ENCODE measurements at regions of chr7 and their contacts with region 1.

Region 1: DNA sequence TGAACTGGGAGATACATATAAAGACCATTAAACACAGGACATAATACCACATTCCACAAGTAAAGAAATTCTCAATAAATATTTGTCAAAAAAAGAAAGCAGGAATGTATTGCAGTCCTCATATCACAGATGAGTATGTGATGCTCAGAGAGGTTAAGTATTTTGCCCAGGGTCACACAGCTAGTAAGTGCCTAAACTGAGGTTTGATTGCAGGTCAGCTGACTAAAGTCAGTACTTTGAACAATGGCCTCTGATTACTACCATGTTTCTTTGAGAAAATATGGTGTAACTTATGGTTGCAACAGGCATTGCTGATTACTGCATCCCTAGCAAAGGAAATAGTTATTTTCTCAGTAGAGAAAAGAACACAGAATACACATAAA is 267.1 kb downstream of the ELMO1 start:
- DNase-seq: no peak
- ATAC-seq: no peak
- H3K4me3 ChIP-seq: no peak overlapping the region
- H3K4me3 Mint-ChIP-seq: no peak overlapping the region
- H3K27ac ChIP-seq: no peak overlapping the region
- H3K27ac Mint-ChIP-seq: no peak overlapping the region
- H3K4me1 ChIP-seq: peaks cover 0 to 9% of the 10 kb centered on the region in 2 donors
- H3K4me1 Mint-ChIP-seq: peaks cover 0 to 17% (median 10%) of the 10 kb centered on the region in 7 donors
- H3K27me3 ChIP-seq: no peaks in the 10 kb centered on the region
- H3K27me3 Mint-ChIP-seq: no peaks in the 10 kb centered on the region

Region 2: GRCh38 chr7:36315309-36316133 is 866.0 kb before region 1 on chr7:
- CTCF ChIA-PET with region 1: interaction called, 4 read pairs
- POLR2A ChIA-PET with region 1: no interaction called
- intact Hi-C with region 1: loop called in 1 of 2 experiments (anchors 5 kb)
- DNase-seq: no peak
- ATAC-seq: no peak
- H3K4me3 ChIP-seq: no peak overlapping the region
- H3K4me3 Mint-ChIP-seq: no peak overlapping the region
- H3K27ac ChIP-seq: no peak overlapping the region
- H3K27ac Mint-ChIP-seq: no peak overlapping the region
- H3K4me1 ChIP-seq: no peaks in the 10 kb centered on the region
- H3K4me1 Mint-ChIP-seq: peaks cover 0 to 5% (median 3%) of the 10 kb centered on the region in 7 donors
- H3K27me3 ChIP-seq: no peaks in the 10 kb centered on the region
- H3K27me3 Mint-ChIP-seq: peaks cover 0 to 2% (median 0%) of the 10 kb centered on the region in 5 donors

Region 3: DNA sequence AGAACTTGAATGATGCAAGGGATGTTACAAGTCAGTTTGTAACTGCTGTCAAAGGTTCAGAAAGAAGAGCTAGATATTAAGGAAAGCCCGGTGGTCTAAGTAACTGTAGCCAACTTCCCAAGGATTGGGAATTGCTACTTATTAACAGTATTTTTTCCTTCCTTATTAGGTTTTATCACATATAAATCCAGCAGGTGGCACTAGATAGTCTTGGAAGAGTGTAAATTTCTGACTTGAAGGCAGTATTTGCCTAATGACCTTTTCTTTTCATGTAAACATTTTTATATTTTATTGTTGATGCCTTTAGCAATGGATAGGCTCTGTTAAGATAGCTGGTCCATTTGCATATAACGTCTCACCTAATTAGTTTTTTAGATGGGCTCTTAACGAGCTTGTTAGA is 740.7 kb before region 1 on chr7:
- CTCF ChIA-PET with region 1: interaction called, 16 read pairs
- POLR2A ChIA-PET with region 1: no interaction called
- intact Hi-C with region 1: loop called in 1 of 2 experiments (anchors 1 kb)
- DNase-seq: peak in 4 of 9 donors; percentile 3 to 19 (median 10)
- ATAC-seq: no peak
- H3K4me3 ChIP-seq: no peak overlapping the region
- H3K4me3 Mint-ChIP-seq: no peak overlapping the region
- H3K27ac ChIP-seq: no peak overlapping the region
- H3K27ac Mint-ChIP-seq: no peak overlapping the region
- H3K4me1 ChIP-seq: no peaks in the 10 kb centered on the region
- H3K4me1 Mint-ChIP-seq: no peaks in the 10 kb centered on the region
- H3K27me3 ChIP-seq: no peaks in the 10 kb centered on the region
- H3K27me3 Mint-ChIP-seq: no peaks in the 10 kb centered on the region

Region 4: DNA sequence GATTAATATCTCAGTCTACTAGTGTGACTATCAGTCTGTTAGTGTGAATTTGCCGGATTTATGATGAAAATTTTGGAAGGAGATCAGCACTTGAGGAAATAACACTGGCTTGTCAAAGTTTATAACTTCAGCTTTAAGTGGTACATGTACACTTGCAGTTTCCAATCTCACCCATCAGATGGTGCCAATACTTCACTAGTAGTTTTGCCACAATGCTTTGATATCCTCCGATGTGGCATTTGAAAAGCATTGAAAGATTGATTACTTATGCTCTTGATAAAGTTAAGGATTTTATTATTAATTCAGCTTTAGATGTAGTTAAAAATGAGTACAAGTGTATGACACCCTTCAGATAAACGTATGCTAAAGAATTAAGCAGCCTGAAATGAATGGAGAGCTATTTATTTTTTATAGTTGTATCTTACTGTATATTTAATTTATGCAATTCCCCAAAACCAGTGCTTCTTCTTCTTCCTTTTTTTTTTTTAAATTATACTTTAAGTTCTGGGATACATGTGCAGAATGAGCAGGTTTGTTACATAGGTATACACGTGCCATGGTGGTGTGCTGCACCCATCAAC is 693.7 kb before region 1 on chr7:
- CTCF ChIA-PET with region 1: interaction called, 30 read pairs
- POLR2A ChIA-PET with region 1: interaction called, 3 read pairs
- intact Hi-C with region 1: loop called (anchors 1 kb)
- DNase-seq: peak in 7 of 9 donors; percentile 47 to 72 (median 61)
- ATAC-seq: peak; percentile 78
- H3K4me3 ChIP-seq: no peak overlapping the region
- H3K4me3 Mint-ChIP-seq: no peak overlapping the region
- H3K27ac ChIP-seq: no peak overlapping the region
- H3K27ac Mint-ChIP-seq: peak overlapping the region in 1 of 9 donors; percentile 81
- H3K4me1 ChIP-seq: no peaks in the 10 kb centered on the region
- H3K4me1 Mint-ChIP-seq: peaks cover 0 to 9% (median 3%) of the 10 kb centered on the region in 7 donors
- H3K27me3 ChIP-seq: no peaks in the 10 kb centered on the region
- H3K27me3 Mint-ChIP-seq: peaks cover 0 to 22% (median 0%) of the 10 kb centered on the region in 5 donors

Region 5: GRCh38 chr7:36677769-36678437 is 503.6 kb before region 1 on chr7:
- CTCF ChIA-PET with region 1: interaction called, 24 read pairs
- POLR2A ChIA-PET with region 1: no interaction called
- intact Hi-C with region 1: loop called (anchors 1 to 5 kb)
- DNase-seq: peak in 5 of 9 donors; percentile 5 to 68 (median 25)
- ATAC-seq: peak; percentile 19
- H3K4me3 ChIP-seq: peak overlapping the region; percentile 5
- H3K4me3 Mint-ChIP-seq: peak overlapping the region; percentile 46 to 84 (median 67)
- H3K27ac ChIP-seq: peak overlapping the region; percentile 55
- H3K27ac Mint-ChIP-seq: peak overlapping the region; percentile 83 to 98 (median 89)
- H3K4me1 ChIP-seq: peaks cover 14 to 29% of the 10 kb centered on the region in 2 donors
- H3K4me1 Mint-ChIP-seq: peaks cover 12 to 72% (median 57%) of the 10 kb centered on the region in 7 donors
- H3K27me3 ChIP-seq: no peaks in the 10 kb centered on the region
- H3K27me3 Mint-ChIP-seq: no peaks in the 10 kb centered on the region

Region 6: DNA sequence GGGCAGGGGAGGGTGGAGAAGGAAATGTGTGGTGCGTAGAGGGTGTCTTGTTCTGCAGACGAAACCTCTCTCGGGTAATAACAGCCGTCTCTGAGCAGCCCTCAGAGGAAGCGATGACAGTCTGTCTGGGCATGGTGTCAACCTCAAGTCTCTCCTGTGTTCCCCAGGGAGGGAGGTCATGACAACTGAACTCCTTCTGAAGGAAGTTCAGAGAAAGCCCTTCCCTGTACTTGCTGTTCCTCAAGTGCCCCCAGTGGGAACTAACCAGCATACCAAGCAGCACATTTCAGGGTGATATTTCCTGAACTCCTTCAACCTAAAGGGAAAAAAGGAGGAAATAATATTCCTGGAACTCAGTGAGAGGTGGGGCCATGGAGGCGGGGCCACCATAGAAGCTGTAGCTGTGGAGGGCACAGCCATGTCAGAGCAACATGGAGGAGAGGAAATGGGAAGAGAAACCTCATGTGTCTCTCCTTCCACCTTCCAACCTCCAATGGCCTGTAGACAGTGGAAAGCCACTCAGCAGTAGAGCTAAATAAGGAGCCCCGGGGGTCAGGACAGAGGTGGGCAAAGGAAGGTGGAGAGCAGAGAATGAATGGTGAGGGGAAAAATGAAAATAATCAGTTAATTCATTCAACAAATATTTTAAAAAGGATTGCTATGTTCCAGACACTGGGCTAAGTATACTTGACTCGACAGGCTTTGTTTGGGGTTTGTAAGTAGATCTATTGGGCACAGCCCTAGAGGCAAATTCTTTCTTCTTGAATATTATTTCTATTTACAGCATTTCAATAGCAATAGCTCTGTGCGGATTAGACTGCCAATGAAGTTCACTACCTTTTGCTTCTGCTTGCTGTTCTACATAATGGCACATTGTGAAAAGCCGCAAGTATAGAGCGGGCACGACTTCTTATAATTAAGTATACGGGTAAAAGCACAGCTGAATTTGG is 396.3 kb before region 1 on chr7:
- CTCF ChIA-PET with region 1: no interaction called
- POLR2A ChIA-PET with region 1: no interaction called
- intact Hi-C with region 1: loop called in 1 of 2 experiments (anchors 5 kb)
- DNase-seq: peak; percentile 23 to 87 (median 84)
- ATAC-seq: peak; percentile 89
- H3K4me3 ChIP-seq: no peak overlapping the region
- H3K4me3 Mint-ChIP-seq: peak overlapping the region; percentile 35 to 85 (median 69)
- H3K27ac ChIP-seq: peak overlapping the region; percentile 78
- H3K27ac Mint-ChIP-seq: peak overlapping the region; percentile 92 to 99 (median 97)
- H3K4me1 ChIP-seq: peaks cover 59 to 87% of the 10 kb centered on the region in 2 donors
- H3K4me1 Mint-ChIP-seq: peaks cover 61 to 95% (median 83%) of the 10 kb centered on the region in 7 donors
- H3K27me3 ChIP-seq: no peaks in the 10 kb centered on the region
- H3K27me3 Mint-ChIP-seq: no peaks in the 10 kb centered on the region

Region 7: DNA sequence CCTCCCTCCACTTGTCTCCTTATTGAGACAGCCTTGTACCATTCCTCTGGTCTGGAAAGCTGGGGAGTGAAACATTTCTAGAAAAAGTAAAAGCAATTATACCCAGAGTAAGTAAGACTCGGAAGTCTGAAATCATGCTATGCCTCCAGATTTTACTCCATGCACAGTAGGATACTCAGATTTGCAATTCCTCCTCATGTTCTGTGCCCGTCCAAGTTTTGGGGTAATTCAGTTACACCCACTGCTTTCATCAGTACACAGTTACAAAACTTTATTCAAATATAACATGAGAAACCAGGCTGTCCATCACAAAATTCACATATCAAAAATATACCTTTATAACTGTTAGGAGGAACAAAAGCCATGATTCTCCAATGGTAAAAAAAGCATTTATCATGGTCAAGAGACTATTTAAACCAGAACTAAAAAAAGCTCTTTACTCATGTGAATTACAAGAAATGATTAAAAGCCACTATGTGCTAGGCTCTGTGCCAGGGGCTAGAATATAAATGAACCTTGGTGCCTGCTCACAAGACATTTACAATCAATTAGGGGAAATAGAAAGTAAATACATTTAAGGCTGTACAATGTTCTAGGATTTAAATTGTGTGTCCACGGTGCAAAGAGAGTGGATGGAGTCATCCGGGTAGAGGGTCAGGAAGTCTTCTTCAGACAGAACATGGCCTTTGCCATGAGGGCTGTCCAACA is 53.1 kb before region 1 on chr7:
- CTCF ChIA-PET with region 1: no interaction called
- POLR2A ChIA-PET with region 1: no interaction called
- intact Hi-C with region 1: no loop called
- DNase-seq: no peak
- ATAC-seq: no peak
- H3K4me3 ChIP-seq: no peak overlapping the region
- H3K4me3 Mint-ChIP-seq: no peak overlapping the region
- H3K27ac ChIP-seq: no peak overlapping the region
- H3K27ac Mint-ChIP-seq: peak overlapping the region in 4 of 9 donors; percentile 2 to 71 (median 35)
- H3K4me1 ChIP-seq: no peaks in the 10 kb centered on the region
- H3K4me1 Mint-ChIP-seq: peaks cover 6 to 27% (median 17%) of the 10 kb centered on the region in 7 donors
- H3K27me3 ChIP-seq: no peaks in the 10 kb centered on the region
- H3K27me3 Mint-ChIP-seq: no peaks in the 10 kb centered on the region

Region 8: DNA sequence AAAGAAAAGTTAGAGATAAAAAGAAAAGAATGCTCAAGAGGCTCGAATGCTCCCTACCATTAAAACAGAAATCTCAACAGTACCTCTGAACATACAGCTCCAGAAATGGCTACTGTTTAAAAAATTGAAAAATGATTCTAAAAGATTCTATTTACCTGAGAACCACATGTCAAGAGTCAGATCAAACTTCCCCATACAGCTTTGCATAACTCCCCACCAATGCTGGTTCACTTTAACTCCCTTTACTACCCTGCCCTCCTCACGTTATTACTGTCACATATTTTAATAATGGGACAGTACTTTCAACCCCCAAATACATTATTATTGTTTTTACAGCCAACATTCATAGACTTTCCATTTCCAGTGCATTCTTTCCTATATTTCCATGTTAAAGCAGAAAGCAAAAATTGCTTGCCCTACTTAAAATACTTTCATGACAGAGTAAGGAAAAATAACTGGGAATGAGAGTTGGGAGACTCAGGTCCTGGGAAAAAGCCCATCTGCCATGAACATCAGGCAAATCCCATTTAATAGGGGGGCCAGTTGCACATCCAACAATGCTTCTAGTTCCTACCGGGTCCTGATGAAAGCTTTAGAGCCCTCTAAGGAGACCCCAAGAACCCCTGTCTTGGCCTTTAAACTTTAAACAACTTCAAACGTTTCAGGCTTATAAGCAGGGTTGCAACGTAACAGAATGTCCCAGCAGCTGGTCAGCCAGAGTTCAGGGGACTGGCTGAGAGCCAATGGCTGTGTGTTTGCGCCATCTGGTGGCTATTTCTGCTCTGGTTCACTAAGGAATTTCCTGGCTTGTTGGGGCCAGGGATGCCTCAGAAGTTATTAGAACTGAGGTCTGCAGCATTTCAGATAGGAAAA is 19.7 kb after region 1 on chr7:
- CTCF ChIA-PET with region 1: interaction called, 31 read pairs
- POLR2A ChIA-PET with region 1: no interaction called
- intact Hi-C with region 1: no loop called
- DNase-seq: peak in 5 of 9 donors; percentile 10 to 44 (median 18)
- ATAC-seq: peak; percentile 64
- H3K4me3 ChIP-seq: no peak overlapping the region
- H3K4me3 Mint-ChIP-seq: no peak overlapping the region
- H3K27ac ChIP-seq: no peak overlapping the region
- H3K27ac Mint-ChIP-seq: peak overlapping the region in 5 of 9 donors; percentile 18 to 74 (median 28)
- H3K4me1 ChIP-seq: no peaks in the 10 kb centered on the region
- H3K4me1 Mint-ChIP-seq: peaks cover 0 to 19% (median 11%) of the 10 kb centered on the region in 7 donors
- H3K27me3 ChIP-seq: no peaks in the 10 kb centered on the region
- H3K27me3 Mint-ChIP-seq: no peaks in the 10 kb centered on the region